ENCODE measurements at regions of chr14 and their contacts with region 1.

Region 1: GRCh38 chr14:89040460-89041259 is 216.2 kb downstream of the TTC8 start:
- DNase-seq: peak; percentile 92
- ATAC-seq: peak; percentile 97

Region 2: DNA sequence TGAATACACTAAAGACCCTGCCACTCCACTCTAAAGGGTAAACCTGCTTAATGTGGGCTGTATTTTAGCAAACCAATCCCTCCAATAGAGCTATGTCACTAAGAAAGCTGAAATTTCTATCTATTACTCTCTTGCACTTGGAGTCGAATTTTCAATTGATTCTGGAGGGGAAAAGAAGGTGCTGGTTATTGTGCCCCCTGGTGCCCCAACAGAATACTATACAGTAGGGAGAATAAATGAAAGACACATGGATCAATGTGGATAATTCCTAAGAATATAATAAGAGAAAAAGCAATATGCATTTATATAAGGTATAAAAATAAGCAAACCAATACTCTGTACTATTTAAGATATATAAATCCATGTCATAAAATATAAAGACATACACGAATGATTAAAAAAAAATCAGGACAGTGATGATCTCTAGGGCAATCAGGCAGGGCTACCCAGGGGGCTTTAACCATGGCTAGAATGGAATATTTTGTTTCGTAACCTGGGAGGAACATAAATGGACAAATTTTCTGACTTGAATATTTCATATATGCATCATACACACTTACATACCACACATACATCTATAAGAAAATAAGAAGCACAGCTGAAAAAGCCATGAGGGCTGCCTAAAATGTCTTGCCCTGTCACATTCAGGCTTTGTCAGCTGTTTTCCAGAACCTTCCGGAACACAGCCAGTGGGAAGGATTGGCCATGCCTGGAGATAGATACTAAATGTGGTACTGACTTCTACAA is 859.4 kb after region 1 on chr14:
- intact Hi-C with region 1: loop called (anchors 5 kb)
- DNase-seq: no peak
- ATAC-seq: peak; percentile 39

Region 3: DNA sequence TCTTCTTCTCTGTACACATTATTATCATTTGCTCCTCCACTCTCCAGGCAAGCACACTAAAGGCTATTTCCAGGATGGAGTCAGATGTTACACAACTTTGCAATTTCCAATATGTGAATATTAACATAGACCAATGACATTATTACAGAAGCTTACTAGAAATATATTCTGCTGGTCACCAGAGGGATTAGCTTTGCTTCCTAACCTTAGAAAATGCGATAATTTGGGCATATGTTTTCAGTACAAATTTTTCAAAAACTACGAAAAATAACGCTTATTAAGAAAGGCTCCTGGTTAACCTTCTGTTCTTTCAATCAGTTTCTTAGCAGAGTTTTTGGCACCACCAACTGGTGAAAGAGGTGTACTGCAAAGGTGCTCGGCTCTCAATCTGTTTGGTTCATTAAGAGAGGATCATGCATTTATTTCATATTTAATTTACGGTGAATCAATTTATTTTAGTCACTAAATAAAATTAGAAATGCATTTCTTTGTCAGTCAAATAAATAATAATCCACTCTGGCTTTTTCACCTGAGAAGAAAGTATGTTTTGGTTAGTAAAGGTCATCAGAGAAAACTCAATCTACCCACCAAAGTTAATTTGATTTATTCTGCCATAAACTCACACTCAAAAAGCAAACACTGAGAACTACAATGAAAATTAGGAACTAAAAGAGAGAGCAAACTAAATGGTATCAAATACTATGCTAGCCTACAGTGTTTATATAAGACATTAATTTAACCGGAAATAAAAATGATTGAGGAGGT is 874.6 kb after region 1 on chr14:
- intact Hi-C with region 1: loop called (anchors 5 kb)
- DNase-seq: no peak
- ATAC-seq: peak; percentile 67

Measured in left ventricle myocardium superior (tissue), 1 donor.